Naive thymus-derived CD4-positive, alpha-beta T cell (primary cell): ENCODE measurements at regions of chr13 and their contacts with region 1.

Region 1: DNA sequence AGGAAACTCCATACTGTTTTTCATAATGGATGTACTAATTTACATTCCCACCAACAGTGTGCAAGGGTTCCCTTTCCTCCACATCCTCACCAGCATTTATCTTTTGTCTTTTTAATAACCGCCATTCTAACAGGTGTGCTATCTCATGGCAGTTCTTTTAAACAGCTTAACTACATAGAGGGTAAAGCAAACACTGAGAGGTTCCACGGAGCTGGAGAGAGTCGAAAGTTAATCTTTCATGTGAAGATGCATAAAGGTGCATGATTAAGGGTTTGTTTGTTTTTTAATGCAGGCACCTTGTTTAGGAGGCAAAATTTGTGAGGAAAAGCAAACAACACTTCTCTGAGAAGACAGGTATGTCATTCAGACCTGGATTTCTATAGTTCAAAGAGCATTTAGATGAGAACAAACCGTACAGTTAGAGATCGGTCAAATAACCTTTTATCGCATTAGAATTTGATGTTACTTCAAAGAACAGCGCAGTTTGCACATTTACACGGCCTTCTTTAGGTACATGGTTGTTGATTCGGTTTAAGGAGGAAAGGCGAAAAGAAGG is 193.9 kb downstream of the RBM26 start:
- DNase-seq: no peak
- ATAC-seq: no peak
- H3K4me3 ChIP-seq: no peak overlapping the region
- H3K4me3 Mint-ChIP-seq: no peak overlapping the region
- H3K27ac ChIP-seq: no peak overlapping the region
- H3K27ac Mint-ChIP-seq: no peak overlapping the region
- H3K4me1 ChIP-seq: no peaks in the 10 kb centered on the region
- H3K4me1 Mint-ChIP-seq: no peaks in the 10 kb centered on the region
- H3K27me3 ChIP-seq: no peaks in the 10 kb centered on the region
- H3K27me3 Mint-ChIP-seq: peaks cover 21 to 32% (median 25%) of the 10 kb centered on the region in 5 donors

Region 2: DNA sequence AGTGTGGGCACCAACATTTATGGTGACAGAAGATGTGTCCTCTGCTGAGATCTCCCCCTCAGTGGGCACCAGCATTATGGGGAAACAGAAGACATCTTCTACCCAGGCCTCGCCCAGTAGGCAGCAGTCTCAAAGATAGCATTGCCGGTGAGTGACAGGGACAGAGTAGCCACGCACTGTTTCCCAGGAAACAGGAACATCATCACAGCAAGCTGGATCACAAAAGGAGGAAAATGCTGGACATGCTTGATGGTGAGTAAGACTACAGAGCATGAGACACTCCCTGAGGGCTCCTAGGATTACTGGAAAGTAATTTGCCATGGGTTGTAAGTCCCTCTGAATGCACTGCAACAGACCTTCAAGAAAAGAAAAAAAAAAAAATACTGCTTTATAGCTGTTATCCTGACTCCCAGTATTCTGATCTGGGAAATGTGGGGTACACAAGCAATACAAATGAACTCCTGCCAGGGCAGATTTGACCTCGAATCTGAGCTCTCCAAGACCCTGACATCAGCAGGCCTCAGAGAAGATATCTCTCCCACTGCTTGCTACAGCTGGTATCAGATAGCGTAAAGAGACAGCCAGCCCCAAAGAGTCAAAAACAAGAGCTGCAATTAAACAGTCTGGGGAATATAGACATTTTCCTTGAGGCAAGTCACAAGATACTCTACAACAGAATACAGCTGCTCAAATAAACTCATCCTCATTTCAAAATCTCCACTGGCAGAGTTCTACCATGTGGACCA is 13.5 kb after region 1 on chr13:
- CTCF ChIA-PET with region 1: no interaction called
- POLR2A ChIA-PET with region 1: no interaction called
- intact Hi-C with region 1: loop called in 1 of 2 experiments (anchors 1 kb)
- DNase-seq: no peak
- ATAC-seq: no peak
- H3K4me3 ChIP-seq: no peak overlapping the region
- H3K4me3 Mint-ChIP-seq: no peak overlapping the region
- H3K27ac ChIP-seq: no peak overlapping the region
- H3K27ac Mint-ChIP-seq: no peak overlapping the region
- H3K4me1 ChIP-seq: no peaks in the 10 kb centered on the region
- H3K4me1 Mint-ChIP-seq: peaks cover 0 to 2% (median 0%) of the 10 kb centered on the region in 7 donors
- H3K27me3 ChIP-seq: no peaks in the 10 kb centered on the region
- H3K27me3 Mint-ChIP-seq: peaks cover 5 to 37% (median 24%) of the 10 kb centered on the region in 5 donors